ENCODE measurements at regions of chr3 and their contacts with region 1.

Region 1: DNA sequence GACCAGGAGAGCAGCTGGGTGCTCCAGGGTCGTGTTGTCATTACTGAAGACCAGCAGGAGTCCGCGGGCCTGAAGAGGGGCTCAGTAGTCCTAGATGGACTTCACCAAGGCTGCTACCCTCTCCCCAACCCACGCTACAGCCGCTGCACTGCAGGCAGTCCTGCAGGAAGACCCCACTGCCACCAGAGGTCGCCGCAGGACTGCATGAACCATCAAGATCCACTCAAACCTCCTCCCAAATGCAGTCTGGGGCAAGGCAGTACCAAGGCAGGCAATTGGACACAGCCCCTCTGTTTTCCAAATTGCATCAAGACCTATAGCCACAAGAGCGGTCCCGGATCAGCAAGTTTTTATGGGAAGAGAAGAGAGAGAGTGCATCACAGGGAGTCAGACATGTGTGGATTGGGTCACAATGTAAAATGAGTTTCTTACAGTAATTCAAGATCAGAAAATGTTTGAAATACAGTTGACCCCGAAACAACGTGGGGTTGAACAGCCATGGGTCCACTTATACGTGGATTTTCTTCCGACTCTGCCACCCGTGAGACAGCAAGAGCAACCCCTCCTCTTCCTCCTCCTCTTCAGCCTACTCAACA is 46.7 kb downstream of the DZIP1L start:
- DNase-seq: peak; percentile 59
- H3K4me3 Mint-ChIP-seq: no peak overlapping the region
- H3K27ac Mint-ChIP-seq: no peak overlapping the region
- H3K4me1 Mint-ChIP-seq: peaks cover 25% of the 10 kb centered on the region
- H3K27me3 Mint-ChIP-seq: peaks cover 16% of the 10 kb centered on the region

Region 2: DNA sequence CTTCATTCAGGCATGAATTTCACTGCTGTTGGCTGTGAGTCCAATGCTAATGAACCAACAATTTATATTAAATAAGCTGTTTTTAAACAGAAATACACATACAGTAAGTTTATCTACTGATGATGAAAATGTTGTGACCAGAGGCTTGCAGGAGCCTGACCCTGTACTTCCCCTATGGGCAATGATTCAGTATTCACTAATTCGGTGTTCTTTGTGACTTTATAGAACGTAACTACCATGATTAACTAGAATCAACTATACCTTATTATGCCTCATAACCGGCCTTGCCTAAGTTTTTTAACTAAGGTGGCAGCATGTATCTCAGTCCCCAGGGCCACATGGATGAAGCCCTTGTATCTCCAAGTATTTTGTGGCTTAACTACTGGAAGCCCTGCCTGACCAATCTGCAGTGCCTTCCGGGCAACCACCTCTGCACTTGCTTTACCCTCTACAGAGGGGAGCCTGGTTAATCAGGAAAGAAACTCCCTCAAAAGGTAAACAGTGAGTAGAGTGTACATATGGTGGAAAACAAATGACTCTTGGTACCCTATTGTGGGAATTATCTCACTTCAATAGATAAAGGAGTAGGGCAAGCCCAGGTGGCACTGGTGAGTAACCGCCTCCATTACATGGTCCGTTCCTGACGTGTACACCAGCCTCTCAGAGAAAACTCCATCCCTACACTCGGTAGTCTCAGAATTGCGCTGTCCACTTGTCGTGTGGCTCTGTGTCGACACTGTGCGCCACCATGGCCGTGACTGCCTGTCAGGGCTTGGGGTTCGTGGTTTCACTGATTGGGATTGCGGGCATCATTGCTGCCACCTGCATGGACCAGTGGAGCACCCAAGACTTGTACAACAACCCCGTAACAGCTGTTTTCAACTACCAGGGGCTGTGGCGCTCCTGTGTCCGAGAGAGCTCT is 70.3 kb before region 1 on chr3:
- intact Hi-C with region 1: no loop called
- DNase-seq: no peak
- H3K4me3 Mint-ChIP-seq: no peak overlapping the region
- H3K27ac Mint-ChIP-seq: no peak overlapping the region
- H3K4me1 Mint-ChIP-seq: no peaks in the 10 kb centered on the region
- H3K27me3 Mint-ChIP-seq: no peaks in the 10 kb centered on the region

Region 3: DNA sequence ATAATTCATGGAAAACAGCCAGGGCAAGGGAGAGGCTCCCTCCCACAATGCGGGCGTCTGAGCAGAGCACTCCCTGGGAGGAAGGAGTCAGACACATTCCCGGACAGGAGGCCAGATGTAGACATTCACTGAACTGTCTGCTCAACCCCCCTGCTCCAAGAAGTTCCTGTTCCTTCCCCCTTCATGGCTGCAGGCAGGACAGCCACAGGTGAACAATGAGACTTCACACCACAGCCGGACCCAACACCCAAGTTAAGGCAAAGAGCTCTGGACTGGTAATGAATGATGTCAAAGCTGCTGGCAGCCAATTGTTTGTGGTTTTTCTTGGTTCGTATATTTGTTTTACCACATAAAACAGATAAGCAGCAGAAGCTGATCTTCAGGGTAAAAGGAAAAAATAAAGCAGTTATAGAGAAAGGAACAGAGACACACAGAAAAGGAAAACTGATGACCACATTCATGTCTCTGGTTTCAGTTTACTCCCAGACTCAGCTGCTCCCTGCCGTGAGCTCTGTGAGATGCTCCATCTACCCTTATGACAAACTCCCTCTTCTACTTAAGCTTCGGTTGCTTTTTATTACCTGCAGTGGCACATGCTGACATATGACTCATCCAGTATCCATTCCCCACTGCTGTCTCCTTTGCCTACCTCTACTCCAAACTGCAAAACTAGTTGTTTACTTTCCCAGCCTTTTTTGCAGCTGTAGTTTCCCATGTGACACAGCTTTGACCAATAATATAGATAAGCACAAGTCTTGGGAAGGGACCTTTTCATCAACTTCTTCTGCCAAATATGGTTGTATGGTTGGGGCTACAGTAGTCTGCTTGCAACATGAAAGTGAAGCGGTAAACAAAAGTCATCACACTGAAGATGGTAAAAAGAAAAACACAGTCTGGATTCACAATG is 13.7 kb after region 1 on chr3:
- intact Hi-C with region 1: loop called (anchors 1 kb)
- DNase-seq: peak; percentile 9
- H3K4me3 Mint-ChIP-seq: peak overlapping the region; percentile 19
- H3K27ac Mint-ChIP-seq: peak overlapping the region; percentile 51
- H3K4me1 Mint-ChIP-seq: peaks cover 25% of the 10 kb centered on the region
- H3K27me3 Mint-ChIP-seq: peaks cover 7% of the 10 kb centered on the region

Region 4: DNA sequence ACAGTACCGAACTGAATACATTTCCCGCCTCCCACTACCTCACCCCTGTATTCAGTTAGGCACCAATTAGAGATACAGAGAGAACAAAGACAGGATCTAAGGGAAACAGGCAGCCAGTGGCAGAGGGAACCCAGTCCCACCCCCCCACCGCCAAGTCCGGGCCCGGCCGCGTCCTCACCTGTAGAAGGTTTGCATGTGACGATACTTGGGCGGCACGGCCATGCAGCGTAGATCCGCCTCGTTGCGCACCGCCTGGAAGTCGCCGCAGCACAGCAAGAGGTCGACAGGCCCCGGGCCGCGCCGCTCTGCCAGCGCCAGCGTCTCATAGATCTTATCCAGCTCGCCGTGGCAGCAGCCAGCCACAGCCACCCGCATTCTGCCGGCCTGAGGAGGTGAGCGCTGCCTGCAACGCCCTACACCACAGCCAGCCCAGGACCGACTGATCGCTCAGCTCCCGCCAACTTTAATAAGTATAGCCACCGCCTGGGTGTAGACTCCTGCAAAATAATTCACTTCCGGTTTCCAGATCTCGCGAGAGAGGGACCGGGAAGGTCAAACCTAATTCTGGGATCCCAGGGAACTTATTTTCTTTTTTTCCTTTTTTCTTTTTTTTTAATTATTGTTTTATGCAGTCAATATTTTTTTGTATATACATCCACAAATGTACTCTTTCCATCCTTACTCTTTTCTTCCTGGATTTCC is 105.9 kb after region 1 on chr3 and contains the start of gene DBR1:
- intact Hi-C with region 1: loop called (anchors 1 kb)
- DNase-seq: peak; percentile 68
- H3K4me3 Mint-ChIP-seq: peak within 1 kb of the TSS; percentile 98
- H3K27ac Mint-ChIP-seq: peak within 1 kb of the TSS; percentile 94
- H3K4me1 Mint-ChIP-seq: peaks cover 42% of the 10 kb centered on the region
- H3K27me3 Mint-ChIP-seq: peaks cover 7% of the 10 kb centered on the region
- total RNA-seq, gene DBR1: 25.7 and 31.0 TPM in 2 replicates

Region 5: DNA sequence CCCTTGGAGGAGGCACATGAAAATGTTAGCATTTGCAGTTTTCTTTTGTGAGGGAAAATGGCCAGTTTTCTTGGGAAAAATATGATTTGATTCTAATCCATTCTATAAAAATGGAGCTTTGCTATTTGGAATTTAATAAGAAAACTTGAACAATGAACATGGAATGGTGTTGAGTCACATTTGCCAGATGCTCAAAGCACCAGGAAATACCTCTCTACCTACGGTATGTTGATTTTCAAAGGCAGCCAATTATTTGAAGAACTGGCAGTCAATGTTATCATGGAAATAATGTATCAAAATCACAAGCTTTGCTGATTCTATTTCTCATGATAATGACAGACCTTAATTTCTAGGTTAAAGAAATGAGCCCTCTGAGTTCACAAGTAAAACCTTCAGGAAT is 246.1 kb after region 1 on chr3:
- intact Hi-C with region 1: no loop called
- DNase-seq: no peak
- H3K4me3 Mint-ChIP-seq: no peak overlapping the region
- H3K27ac Mint-ChIP-seq: no peak overlapping the region
- H3K4me1 Mint-ChIP-seq: no peaks in the 10 kb centered on the region
- H3K27me3 Mint-ChIP-seq: peaks cover 2% of the 10 kb centered on the region

Region 6: DNA sequence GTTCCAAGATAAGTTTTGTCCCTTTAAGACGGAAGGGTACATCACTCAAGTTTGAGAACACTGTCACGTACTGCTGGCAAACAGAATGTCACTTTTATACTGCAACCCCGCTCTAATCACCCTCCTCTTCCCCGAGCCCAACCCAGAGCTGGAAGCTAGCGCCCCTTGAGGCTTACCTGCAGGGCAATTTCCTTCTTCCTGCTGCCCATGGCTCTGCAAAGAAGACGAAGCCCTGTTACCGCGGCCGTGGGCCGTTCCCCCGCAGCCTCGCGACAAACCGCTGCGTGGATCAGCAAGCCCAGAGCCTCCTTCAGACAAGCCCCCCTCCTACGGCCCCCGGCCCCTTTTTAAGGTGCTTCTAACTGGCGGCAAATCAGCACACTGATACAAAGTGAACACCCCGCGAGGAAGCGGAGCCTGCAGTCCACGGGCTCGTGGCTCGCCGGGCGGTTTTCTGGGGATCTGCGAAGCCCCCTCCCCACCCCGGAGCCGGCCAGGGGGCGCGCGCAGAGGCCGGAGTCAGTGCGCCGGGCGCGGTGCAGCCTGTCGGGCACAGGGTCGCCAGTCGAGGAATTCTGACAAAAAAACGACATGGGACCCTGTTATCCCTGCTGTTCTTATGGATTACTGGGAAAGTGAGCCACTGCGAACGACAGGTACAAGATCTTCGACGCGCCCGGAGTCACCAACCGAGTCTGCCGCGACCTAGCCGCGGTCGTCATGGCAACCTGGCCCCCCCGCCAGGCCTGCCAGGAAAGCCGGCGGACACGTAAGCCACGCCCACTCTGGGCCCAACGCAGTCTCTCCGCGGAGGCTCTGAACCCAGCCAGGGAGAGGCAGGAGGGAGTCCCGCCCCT is 260.7 kb after region 1 on chr3 and contains the start of gene NME9:
- intact Hi-C with region 1: loop called (anchors 1 kb)
- DNase-seq: peak; percentile 83
- H3K4me3 Mint-ChIP-seq: peak within 1 kb of the TSS; percentile 87
- H3K27ac Mint-ChIP-seq: peak within 1 kb of the TSS; percentile 68
- H3K4me1 Mint-ChIP-seq: peaks cover 33% of the 10 kb centered on the region
- H3K27me3 Mint-ChIP-seq: peaks cover 2% of the 10 kb centered on the region
- total RNA-seq, gene NME9: not detected in 2 replicates

Region 7: DNA sequence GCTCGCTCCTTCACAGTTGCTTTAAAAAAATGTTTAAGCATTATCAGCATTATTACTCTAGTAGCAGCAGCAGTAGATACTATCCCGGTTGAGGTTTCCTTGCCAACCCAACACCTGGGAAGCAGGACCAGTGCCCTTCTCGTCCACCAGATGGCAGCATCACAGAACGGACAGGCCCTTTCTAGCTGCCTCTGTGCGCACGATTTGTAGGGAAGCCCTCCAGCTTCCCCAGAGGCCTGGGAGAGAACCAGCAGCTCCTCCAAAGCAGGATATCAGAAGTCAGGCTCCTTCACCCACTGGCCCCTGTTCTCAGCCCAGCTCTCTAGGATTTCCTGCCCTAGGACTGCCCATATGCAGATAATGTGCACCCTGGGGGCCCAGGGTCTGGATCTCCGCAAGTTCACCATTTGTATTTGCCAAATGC is 348.9 kb after region 1 on chr3:
- intact Hi-C with region 1: loop called (anchors 5 kb)
- DNase-seq: peak; percentile 42
- H3K4me3 Mint-ChIP-seq: no peak overlapping the region
- H3K27ac Mint-ChIP-seq: no peak overlapping the region
- H3K4me1 Mint-ChIP-seq: no peaks in the 10 kb centered on the region
- H3K27me3 Mint-ChIP-seq: peaks cover 13% of the 10 kb centered on the region

Region 8: GRCh38 chr3:138923531-138923994 is 854.9 kb after region 1 on chr3:
- intact Hi-C with region 1: loop called (anchors 2 kb)
- DNase-seq: peak; percentile 74
- H3K4me3 Mint-ChIP-seq: no peak overlapping the region
- H3K27ac Mint-ChIP-seq: no peak overlapping the region
- H3K4me1 Mint-ChIP-seq: peaks cover 4% of the 10 kb centered on the region
- H3K27me3 Mint-ChIP-seq: peaks cover 16% of the 10 kb centered on the region

Measured in activated T-helper 1 cell treated with anti-CD3 and anti-CD28 coated beads, Interleukin-12 subunit alpha, Interleukin-12 subunit beta, Interleukin-2, Interleukin-4 antibody, amounts not matched to agents 30 ng/mL and 10 ng/mL and 1 ng/mL, durations not matched to agents 14 hours and 24 hours and 36 hours (primary cell).